ENCODE measurements at regions of chr16 and their contacts with region 1.

Region 1: GRCh38 chr16:14529010-14529669 is 100.9 kb downstream of the PARN start:
- DNase-seq: peak; percentile 85 to 94 (median 91)
- H3K4me3 ChIP-seq: peak overlapping the region in 1 of 7 experiments; percentile 55
- H3K27ac ChIP-seq: no peak overlapping the region
- H3K4me1 ChIP-seq: peaks cover 0 to 6% (median 3%) of the 10 kb centered on the region in 4 experiments
- H3K27me3 ChIP-seq: no peaks in the 10 kb centered on the region

Region 2: GRCh38 chr16:14249291-14250032 is 279.7 kb before region 1 on chr16:
- CTCF ChIA-PET with region 1: interaction called, 20 read pairs
- POLR2A ChIA-PET with region 1: interaction called, 3 read pairs
- DNase-seq: peak; percentile 41 to 67 (median 60)
- H3K4me3 ChIP-seq: no peak overlapping the region
- H3K27ac ChIP-seq: no peak overlapping the region
- H3K4me1 ChIP-seq: no peaks in the 10 kb centered on the region
- H3K27me3 ChIP-seq: no peaks in the 10 kb centered on the region